K562 (cell line): ENCODE measurements at regions of chr6 and their contacts with region 1.

Region 1: GRCh38 chr6:44431118-44431725 is 43.7 kb downstream of the CDC5L start:
- DNase-seq: peak; percentile 55 to 78 (median 59)
- ATAC-seq: peak; percentile 94
- H3K4me3 ChIP-seq: no peak overlapping the region
- H3K27ac ChIP-seq: no peak overlapping the region
- H3K4me1 ChIP-seq: no peaks in the 10 kb centered on the region
- H3K27me3 ChIP-seq: no peaks in the 10 kb centered on the region
- CTCF ChIP-seq: peak; percentile 69 to 95 (median 80)
- EP300 ChIP-seq: no peak
- POLR2A ChIP-seq: no peak
- RAD21 ChIP-seq: peak; percentile 75 to 83

Region 2: GRCh38 chr6:44446628-44447306 is 15.5 kb after region 1 on chr6:
- CTCF ChIA-PET with region 1: no interaction called
- POLR2A ChIA-PET with region 1: interaction called, 12 read pairs
- in situ Hi-C with region 1: no loop called
- intact Hi-C with region 1: no loop called
- DNase-seq: no peak
- ATAC-seq: no peak
- H3K4me3 ChIP-seq: no peak overlapping the region
- H3K27ac ChIP-seq: no peak overlapping the region
- H3K4me1 ChIP-seq: no peaks in the 10 kb centered on the region; a peak in 1 of 5 replicates
- H3K27me3 ChIP-seq: no peaks in the 10 kb centered on the region
- CTCF ChIP-seq: no peak
- EP300 ChIP-seq: no peak
- POLR2A ChIP-seq: no peak
- RAD21 ChIP-seq: no peak

Region 3: DNA sequence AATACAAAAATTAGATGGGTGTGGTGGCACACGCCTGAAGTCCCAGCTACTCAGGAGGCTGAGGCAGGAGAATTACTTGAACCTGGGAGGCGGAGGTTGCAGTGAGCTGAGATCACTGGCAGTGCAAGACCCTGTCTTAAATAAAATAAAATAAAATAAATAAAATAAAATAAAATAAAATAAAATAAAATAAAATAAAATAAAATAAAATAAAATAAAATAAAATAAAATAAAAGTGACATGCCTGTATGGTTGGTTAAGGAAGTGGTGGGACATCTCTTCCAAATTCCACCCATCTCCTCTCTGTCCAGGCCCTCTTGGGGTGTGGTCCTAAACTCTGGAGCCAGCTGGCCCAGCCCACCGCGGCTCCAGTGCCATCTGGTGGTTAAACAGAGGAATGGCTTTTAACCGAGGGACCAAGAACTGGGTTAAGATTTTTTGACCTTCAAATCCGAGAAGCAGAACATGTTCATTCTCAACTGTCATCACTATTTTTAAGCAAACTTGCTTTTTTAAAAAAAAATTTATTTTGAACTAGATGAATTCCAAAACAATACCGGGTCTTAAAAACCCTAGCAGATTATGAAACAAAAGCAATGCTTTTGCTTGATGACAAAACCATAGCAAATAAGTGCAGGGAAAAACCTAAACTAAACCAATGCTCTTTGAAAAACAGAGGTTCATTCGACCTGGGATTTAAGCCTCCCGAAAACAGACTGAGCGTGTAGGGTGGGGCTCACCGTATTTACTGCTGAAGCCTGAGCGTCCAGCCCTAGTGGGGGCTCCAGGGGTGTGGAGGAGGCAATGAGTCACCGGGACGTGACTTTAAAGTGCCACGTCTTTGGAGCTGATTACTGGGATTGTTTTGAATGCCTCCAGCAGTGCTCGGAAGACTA is 25.1 kb after region 1 on chr6:
- CTCF ChIA-PET with region 1: interaction called, 32 read pairs
- POLR2A ChIA-PET with region 1: interaction called, 7 read pairs
- in situ Hi-C with region 1: no loop called
- intact Hi-C with region 1: loop called (anchors 1 kb)
- DNase-seq: peak; percentile 82 to 86 (median 84)
- ATAC-seq: peak; percentile 91
- H3K4me3 ChIP-seq: peak overlapping the region; percentile 17
- H3K27ac ChIP-seq: peak overlapping the region; percentile 26; the same call in 1 of the 3 replicates
- H3K4me1 ChIP-seq: peaks cover 8 to 18% of the 10 kb centered on the region in 2 experiments; a peak in 4 of 5 replicates
- H3K27me3 ChIP-seq: peaks cover 0 to 3% of the 10 kb centered on the region in 2 experiments; a peak in 1 of 5 replicates
- CTCF ChIP-seq: peak; percentile 88 to 96 (median 91)
- EP300 ChIP-seq: no peak
- POLR2A ChIP-seq: no peak
- RAD21 ChIP-seq: peak; percentile 78 to 86